Cardiac septum (tissue), 1 donor: ENCODE measurements at regions of chr19 and their contacts with region 1.

Region 1: DNA sequence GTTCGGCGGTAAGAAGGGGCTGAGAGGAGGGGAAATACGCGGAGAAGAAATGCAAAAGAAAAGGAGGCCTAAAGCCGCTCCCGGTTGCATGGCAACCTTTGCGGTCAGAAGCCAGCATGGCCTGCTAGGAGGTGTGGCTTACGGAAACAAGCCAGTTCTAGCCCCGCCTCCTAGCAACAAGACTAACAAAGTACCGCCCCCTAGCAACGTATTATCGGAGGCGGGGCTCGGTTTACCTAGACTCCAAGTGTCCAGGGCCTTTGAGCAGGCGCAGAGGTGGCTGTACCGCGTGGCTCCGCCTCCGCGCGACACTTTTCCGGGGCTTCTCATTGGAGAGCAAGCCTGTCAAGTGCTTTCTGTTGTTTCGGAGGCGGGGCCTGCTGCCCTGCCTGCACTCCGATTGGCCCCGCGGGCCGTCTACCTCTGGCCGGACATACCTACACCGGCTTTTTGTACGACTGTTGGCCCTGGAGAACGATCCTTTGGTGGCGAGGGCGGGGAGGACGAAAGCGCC is 337 bp upstream of the CYTH2 start:
- DNase-seq: peak; percentile 100

Region 2: DNA sequence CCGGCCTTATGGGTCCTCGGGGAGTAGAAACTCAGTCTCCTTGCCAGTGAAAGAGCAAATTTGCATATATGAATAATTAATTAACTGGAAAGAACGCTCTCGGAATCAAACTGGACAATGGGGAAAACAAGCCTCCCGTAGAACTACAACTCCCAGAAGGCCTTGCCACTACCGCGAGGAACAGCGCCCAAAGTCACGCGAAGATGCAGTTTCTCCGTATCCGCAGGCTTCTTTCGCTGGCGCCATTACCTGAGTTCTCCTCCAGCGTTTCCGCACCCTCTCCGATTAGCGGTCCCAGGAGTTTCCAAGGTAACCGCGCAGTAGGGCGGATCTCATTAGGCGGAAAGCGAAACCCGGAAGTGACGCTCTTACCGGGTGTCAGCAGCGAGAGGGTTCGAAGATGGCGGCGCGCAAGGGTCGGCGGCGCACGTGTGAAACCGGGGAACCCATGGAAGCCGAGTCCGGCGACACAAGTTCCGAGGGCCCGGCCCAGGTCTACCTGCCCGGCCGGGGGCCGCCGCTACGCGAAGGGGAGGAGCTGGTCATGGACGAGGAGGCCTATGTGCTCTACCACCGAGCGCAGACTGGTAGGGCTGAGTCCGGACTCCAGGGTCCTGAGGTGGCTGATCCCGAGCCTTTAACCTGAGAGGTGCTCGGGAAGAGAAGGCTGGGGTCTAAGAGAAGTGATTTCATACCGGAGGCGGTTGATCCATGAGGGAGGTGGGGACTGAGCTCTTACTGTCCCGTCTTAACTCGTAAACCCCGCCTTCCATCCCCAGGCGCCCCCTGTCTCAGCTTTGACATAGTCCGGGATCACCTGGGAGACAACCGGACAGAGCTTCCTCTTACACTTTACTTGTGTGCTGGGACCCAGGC is 23.0 kb before region 1 on chr19 and contains the start of gene GRWD1:
- intact Hi-C with region 1: loop called (anchors 1 kb)
- DNase-seq: peak; percentile 95
- total RNA-seq, gene GRWD1: 17.5 TPM

Region 3: GRCh38 chr19:48492925-48493717 is 24.3 kb after region 1 on chr19:
- intact Hi-C with region 1: no loop called
- DNase-seq: peak; percentile 97

Region 4: GRCh38 chr19:48513289-48514122 is 44.7 kb after region 1 on chr19:
- intact Hi-C with region 1: loop called (anchors 5 kb)
- DNase-seq: no peak

Region 5: GRCh38 chr19:48569814-48570213 is 101.0 kb after region 1 on chr19:
- intact Hi-C with region 1: no loop called
- DNase-seq: no peak